Caco-2 (cell line): ENCODE measurements at regions of chr12 and their contacts with region 1.

Region 1: GRCh38 chr12:100200463-100201181 is at the start of gene ACTR6:
- DNase-seq: peak; percentile 94
- H3K4me3 ChIP-seq: peak within 1 kb of the TSS; percentile 65
- H3K4me3 Mint-ChIP-seq: peak within 1 kb of the TSS; percentile 88
- H3K27ac Mint-ChIP-seq: peak within 1 kb of the TSS; percentile 48
- H3K4me1 ChIP-seq: peaks cover 7% of the 10 kb centered on the region
- H3K4me1 Mint-ChIP-seq: no peaks in the 10 kb centered on the region
- H3K27me3 ChIP-seq: no peaks in the 10 kb centered on the region
- H3K27me3 Mint-ChIP-seq: no peaks in the 10 kb centered on the region
- CTCF ChIP-seq: no peak
- total RNA-seq, gene ACTR6: 25.0 and 26.0 TPM in 2 replicates

Region 2: GRCh38 chr12:100020370-100020769 is 180.3 kb before region 1 on chr12:
- CTCF ChIA-PET with region 1: no interaction called
- POLR2A ChIA-PET with region 1: no interaction called
- intact Hi-C with region 1: no loop called
- DNase-seq: no peak
- H3K4me3 ChIP-seq: no peak overlapping the region
- H3K4me3 Mint-ChIP-seq: no peak overlapping the region
- H3K27ac Mint-ChIP-seq: no peak overlapping the region
- H3K4me1 ChIP-seq: no peaks in the 10 kb centered on the region
- H3K4me1 Mint-ChIP-seq: no peaks in the 10 kb centered on the region
- H3K27me3 ChIP-seq: no peaks in the 10 kb centered on the region
- H3K27me3 Mint-ChIP-seq: no peaks in the 10 kb centered on the region
- CTCF ChIP-seq: no peak

Region 3: DNA sequence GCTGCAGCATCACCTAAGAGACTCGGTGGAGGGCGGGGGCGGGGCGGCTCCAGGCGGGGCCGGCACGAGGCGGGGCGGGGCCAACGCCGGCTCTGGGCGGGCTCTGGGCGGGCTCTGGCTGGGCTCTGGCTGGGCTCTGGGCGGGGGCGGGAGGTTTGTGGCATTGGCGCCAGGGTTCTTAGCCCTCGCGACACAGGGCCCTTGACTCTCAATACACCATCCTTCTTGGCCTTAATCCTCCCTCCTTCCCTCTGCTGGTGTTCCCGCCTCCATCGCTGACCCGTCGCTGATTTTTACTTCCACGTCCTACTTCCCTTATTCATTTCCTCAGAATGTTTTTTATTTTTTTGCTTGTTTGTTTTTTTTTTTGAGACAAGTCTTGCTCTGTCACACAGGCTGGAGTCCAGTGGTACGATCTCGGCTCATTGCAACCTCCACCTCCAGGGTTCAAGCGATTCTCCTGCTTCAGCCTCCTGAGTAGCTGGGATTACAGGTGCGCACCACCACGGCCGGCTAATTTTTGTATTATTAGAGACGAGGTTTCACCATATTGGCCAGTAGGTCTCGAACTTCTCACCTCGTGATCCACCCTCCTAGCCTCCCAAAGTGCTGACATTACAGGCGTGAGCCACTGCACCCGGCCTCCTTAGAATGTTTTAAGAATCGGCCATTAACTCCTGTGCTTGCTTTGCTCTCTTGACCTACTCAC is 57.6 kb before region 1 on chr12 and contains the start of gene BLTP3B:
- CTCF ChIA-PET with region 1: no interaction called
- POLR2A ChIA-PET with region 1: interaction called, 3 read pairs
- intact Hi-C with region 1: loop called (anchors 5 kb)
- DNase-seq: peak; percentile 87 to 89
- H3K4me3 ChIP-seq: peak within 1 kb of the TSS; percentile 99
- H3K4me3 Mint-ChIP-seq: peak within 1 kb of the TSS; percentile 72
- H3K27ac Mint-ChIP-seq: peak within 1 kb of the TSS; percentile 86
- H3K4me1 ChIP-seq: no peaks in the 10 kb centered on the region
- H3K4me1 Mint-ChIP-seq: peaks cover 23% of the 10 kb centered on the region
- H3K27me3 ChIP-seq: no peaks in the 10 kb centered on the region
- H3K27me3 Mint-ChIP-seq: no peaks in the 10 kb centered on the region
- CTCF ChIP-seq: no peak
- total RNA-seq, gene BLTP3B: 26.6 and 29.6 TPM in 2 replicates

Region 4: DNA sequence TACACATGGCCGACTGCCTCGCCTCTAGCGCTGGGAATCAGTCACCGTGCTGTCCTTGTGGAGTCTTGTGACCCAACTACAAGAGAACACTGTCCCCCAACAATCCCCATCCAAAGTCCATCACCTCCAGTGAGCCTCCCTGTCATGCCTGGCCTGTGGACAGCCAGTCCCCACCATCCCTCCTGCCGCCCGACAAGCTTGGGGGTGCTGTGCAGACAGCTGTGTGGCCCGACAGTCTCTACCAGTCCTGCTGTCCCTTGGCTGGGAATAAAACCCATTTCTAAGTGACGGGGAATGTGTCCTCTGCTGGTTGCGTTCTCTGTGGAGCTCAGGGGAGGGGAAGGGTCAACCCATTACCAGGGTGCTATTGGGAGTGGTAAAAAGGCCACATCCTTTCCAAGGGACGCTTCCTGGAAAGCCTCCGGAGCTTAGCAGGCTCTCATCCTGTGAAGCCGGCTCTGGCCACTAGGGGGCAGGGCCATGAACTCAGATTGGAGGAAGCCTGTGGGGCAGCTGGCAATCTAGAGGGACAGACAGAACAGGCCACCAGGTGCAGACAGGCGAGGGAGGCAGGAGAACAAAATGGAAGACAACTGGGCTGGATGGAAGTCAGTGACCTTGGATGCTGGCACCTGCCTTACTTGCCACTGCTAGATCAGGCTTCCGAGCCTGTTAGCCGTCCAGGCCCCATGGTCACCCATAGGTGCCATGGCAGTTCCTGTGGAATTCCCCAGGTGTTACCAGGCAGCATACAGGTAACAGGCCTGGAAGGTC is 46.0 kb before region 1 on chr12:
- CTCF ChIA-PET with region 1: no interaction called
- POLR2A ChIA-PET with region 1: no interaction called
- intact Hi-C with region 1: loop called (anchors 2 kb)
- DNase-seq: peak; percentile 70 to 75
- H3K4me3 ChIP-seq: no peak overlapping the region
- H3K4me3 Mint-ChIP-seq: no peak overlapping the region
- H3K27ac Mint-ChIP-seq: peak overlapping the region; percentile 53
- H3K4me1 ChIP-seq: no peaks in the 10 kb centered on the region
- H3K4me1 Mint-ChIP-seq: peaks cover 6% of the 10 kb centered on the region
- H3K27me3 ChIP-seq: no peaks in the 10 kb centered on the region
- H3K27me3 Mint-ChIP-seq: no peaks in the 10 kb centered on the region
- CTCF ChIP-seq: peak; percentile 66 to 74

Region 5: GRCh38 chr12:100504804-100505203 is 304.2 kb after region 1 on chr12:
- CTCF ChIA-PET with region 1: no interaction called
- POLR2A ChIA-PET with region 1: no interaction called
- intact Hi-C with region 1: no loop called
- DNase-seq: no peak
- H3K4me3 ChIP-seq: no peak overlapping the region
- H3K4me3 Mint-ChIP-seq: no peak overlapping the region
- H3K27ac Mint-ChIP-seq: no peak overlapping the region
- H3K4me1 ChIP-seq: peaks cover 8% of the 10 kb centered on the region
- H3K4me1 Mint-ChIP-seq: no peaks in the 10 kb centered on the region
- H3K27me3 ChIP-seq: no peaks in the 10 kb centered on the region; the same call in 1 of the 2 replicates
- H3K27me3 Mint-ChIP-seq: no peaks in the 10 kb centered on the region
- CTCF ChIP-seq: no peak